ENCODE measurements at regions of chr17 and their contacts with region 1.

Region 1: DNA sequence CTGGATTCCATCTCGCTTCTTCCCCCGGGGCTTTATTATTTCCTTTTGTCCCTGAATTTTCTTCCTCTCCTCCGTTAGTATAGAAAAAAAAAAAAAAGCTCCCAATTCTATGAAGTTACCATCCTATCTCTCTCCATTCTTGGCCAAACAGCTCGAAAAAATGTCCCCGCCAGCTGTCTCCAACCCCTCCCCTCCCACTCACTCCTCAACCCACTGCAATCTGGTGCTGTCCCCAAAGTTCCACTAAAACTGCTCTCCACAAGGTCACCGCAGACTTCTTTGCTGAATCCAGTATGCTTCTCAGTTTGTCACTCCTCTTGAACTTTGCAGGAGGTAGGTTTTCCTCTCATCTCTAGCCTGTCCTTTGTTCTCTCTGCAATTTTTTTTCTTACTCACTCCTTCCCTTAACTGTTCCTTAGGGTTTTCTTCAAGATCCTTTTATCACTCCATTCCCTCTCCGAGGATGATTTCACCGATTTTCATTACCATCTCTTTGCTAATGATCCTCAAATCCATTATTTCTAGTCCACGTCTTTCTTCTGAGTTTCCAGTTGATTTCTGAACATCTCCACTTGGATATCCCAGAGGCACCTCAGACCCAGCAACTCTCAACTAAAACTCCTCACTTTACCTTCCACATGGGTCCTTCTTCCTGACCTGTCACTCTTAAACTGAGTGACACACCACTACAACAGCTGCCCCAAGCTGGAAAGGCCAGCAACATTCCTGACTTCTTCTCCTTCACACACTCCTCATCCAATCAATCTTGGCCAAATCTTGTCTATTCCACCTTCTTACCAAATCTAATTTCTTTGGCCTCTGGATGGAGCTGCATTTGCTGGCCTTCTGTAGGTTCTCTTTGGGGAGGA is 1.5 kb upstream of the SUMO2 start:
- DNase-seq: no peak
- ATAC-seq: no peak
- H3K4me3 ChIP-seq: no peak overlapping the region
- H3K27ac ChIP-seq: no peak overlapping the region
- H3K4me1 ChIP-seq: no peaks in the 10 kb centered on the region; the same call in 1 of the 2 replicates
- H3K27me3 ChIP-seq: no peaks in the 10 kb centered on the region
- CTCF ChIP-seq: no peak

Region 2: GRCh38 chr17:75147878-75148546 is 36.2 kb before region 1 on chr17:
- CTCF ChIA-PET with region 1: no interaction called
- POLR2A ChIA-PET with region 1: interaction called, 10 read pairs
- in situ Hi-C with region 1: no loop called
- intact Hi-C with region 1: no loop called
- DNase-seq: no peak
- ATAC-seq: no peak
- H3K4me3 ChIP-seq: no peak overlapping the region
- H3K27ac ChIP-seq: peak overlapping the region; percentile 10; the same call in 1 of the 2 replicates
- H3K4me1 ChIP-seq: peaks cover 3% of the 10 kb centered on the region; the same call in 1 of the 2 replicates
- H3K27me3 ChIP-seq: no peaks in the 10 kb centered on the region
- CTCF ChIP-seq: no peak

Region 3: GRCh38 chr17:75163074-75163473 is 21.2 kb before region 1 on chr17:
- CTCF ChIA-PET with region 1: no interaction called
- POLR2A ChIA-PET with region 1: no interaction called
- in situ Hi-C with region 1: no loop called
- intact Hi-C with region 1: no loop called
- DNase-seq: no peak
- ATAC-seq: no peak
- H3K4me3 ChIP-seq: no peak overlapping the region
- H3K27ac ChIP-seq: no peak overlapping the region
- H3K4me1 ChIP-seq: peaks cover 22% of the 10 kb centered on the region
- H3K27me3 ChIP-seq: no peaks in the 10 kb centered on the region
- CTCF ChIP-seq: no peak